CD4-positive, alpha-beta T cell (primary cell): ENCODE measurements at regions of chr17 and their contacts with region 1.

Region 1: GRCh38 chr17:40615295-40615988 is 32.2 kb downstream of the SMARCE1 start:
- DNase-seq: peak in 9 of 14 experiments; percentile 44 to 89 (median 55)
- ATAC-seq: peak; percentile 35
- H3K4me3 ChIP-seq: no peak overlapping the region
- H3K4me3 Mint-ChIP-seq: peak overlapping the region; percentile 75
- H3K27ac ChIP-seq: peak overlapping the region; percentile 96 to 99
- H3K27ac Mint-ChIP-seq: peak overlapping the region; percentile 98
- H3K4me1 ChIP-seq: peaks cover 83% of the 10 kb centered on the region
- H3K4me1 Mint-ChIP-seq: peaks cover 72% of the 10 kb centered on the region
- H3K27me3 ChIP-seq: no peaks in the 10 kb centered on the region
- H3K27me3 Mint-ChIP-seq: no peaks in the 10 kb centered on the region
- CTCF ChIP-seq: peak; percentile 67

Region 2: GRCh38 chr17:39443326-39443725 is 1172.1 kb before region 1 on chr17:
- CTCF ChIA-PET with region 1: no interaction called
- POLR2A ChIA-PET with region 1: no interaction called
- intact Hi-C with region 1: no loop called
- DNase-seq: no peak
- ATAC-seq: no peak
- H3K4me3 ChIP-seq: no peak overlapping the region
- H3K4me3 Mint-ChIP-seq: no peak overlapping the region
- H3K27ac ChIP-seq: no peak overlapping the region
- H3K27ac Mint-ChIP-seq: no peak overlapping the region
- H3K4me1 ChIP-seq: no peaks in the 10 kb centered on the region
- H3K4me1 Mint-ChIP-seq: peaks cover 14% of the 10 kb centered on the region
- H3K27me3 ChIP-seq: no peaks in the 10 kb centered on the region
- H3K27me3 Mint-ChIP-seq: no peaks in the 10 kb centered on the region
- CTCF ChIP-seq: no peak

Region 3: DNA sequence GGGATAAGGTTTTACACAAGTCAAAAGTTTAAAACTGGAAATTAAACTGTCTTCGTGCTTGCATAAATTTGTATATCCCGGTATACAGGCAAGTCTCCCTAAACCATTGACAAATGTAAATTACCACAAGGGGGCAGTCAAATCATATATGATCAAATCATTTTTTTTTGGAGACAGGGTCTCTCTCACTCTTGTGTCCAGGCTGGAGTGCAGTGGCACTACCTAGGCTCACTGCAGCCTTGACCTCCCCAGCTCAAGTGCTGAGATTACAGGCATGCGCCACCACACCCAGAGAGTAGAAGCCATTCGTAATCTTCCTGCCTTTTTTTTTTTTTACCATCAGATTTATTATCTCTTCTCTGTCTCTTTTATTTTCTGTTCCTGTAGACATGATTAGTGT is 216.3 kb before region 1 on chr17:
- CTCF ChIA-PET with region 1: no interaction called
- POLR2A ChIA-PET with region 1: no interaction called
- intact Hi-C with region 1: loop called in 1 of 2 experiments (anchors 5 kb)
- DNase-seq: peak in 5 of 14 experiments; percentile 7 to 80 (median 52)
- ATAC-seq: peak; percentile 71
- H3K4me3 ChIP-seq: no peak overlapping the region
- H3K4me3 Mint-ChIP-seq: no peak overlapping the region
- H3K27ac ChIP-seq: no peak overlapping the region
- H3K27ac Mint-ChIP-seq: no peak overlapping the region
- H3K4me1 ChIP-seq: peaks cover 3% of the 10 kb centered on the region
- H3K4me1 Mint-ChIP-seq: peaks cover 22% of the 10 kb centered on the region
- H3K27me3 ChIP-seq: no peaks in the 10 kb centered on the region
- H3K27me3 Mint-ChIP-seq: no peaks in the 10 kb centered on the region
- CTCF ChIP-seq: peak; percentile 91

Region 4: GRCh38 chr17:40480501-40481003 is 134.9 kb before region 1 on chr17:
- CTCF ChIA-PET with region 1: no interaction called
- POLR2A ChIA-PET with region 1: no interaction called
- intact Hi-C with region 1: loop called in 1 of 2 experiments (anchors 5 kb)
- DNase-seq: peak; percentile 71 to 96 (median 83)
- ATAC-seq: peak; percentile 87
- H3K4me3 ChIP-seq: no peak overlapping the region
- H3K4me3 Mint-ChIP-seq: peak overlapping the region; percentile 68
- H3K27ac ChIP-seq: peak overlapping the region; percentile 57 to 71
- H3K27ac Mint-ChIP-seq: peak overlapping the region; percentile 97
- H3K4me1 ChIP-seq: peaks cover 80% of the 10 kb centered on the region
- H3K4me1 Mint-ChIP-seq: peaks cover 67% of the 10 kb centered on the region
- H3K27me3 ChIP-seq: no peaks in the 10 kb centered on the region
- H3K27me3 Mint-ChIP-seq: no peaks in the 10 kb centered on the region
- CTCF ChIP-seq: no peak

Region 5: GRCh38 chr17:40551879-40552768 is 63.3 kb before region 1 on chr17:
- CTCF ChIA-PET with region 1: interaction called, 28 read pairs
- POLR2A ChIA-PET with region 1: interaction called, 1,290 read pairs
- intact Hi-C with region 1: no loop called
- DNase-seq: peak in 6 of 14 experiments; percentile 39 to 76 (median 44)
- ATAC-seq: no peak
- H3K4me3 ChIP-seq: no peak overlapping the region
- H3K4me3 Mint-ChIP-seq: peak overlapping the region; percentile 55
- H3K27ac ChIP-seq: peak overlapping the region in 1 of 2 donors; percentile 100
- H3K27ac Mint-ChIP-seq: peak overlapping the region; percentile 92
- H3K4me1 ChIP-seq: peaks cover 99% of the 10 kb centered on the region
- H3K4me1 Mint-ChIP-seq: peaks cover 99% of the 10 kb centered on the region
- H3K27me3 ChIP-seq: no peaks in the 10 kb centered on the region
- H3K27me3 Mint-ChIP-seq: no peaks in the 10 kb centered on the region
- CTCF ChIP-seq: no peak

Region 6: GRCh38 chr17:40582328-40582901 is 33.0 kb before region 1 on chr17:
- CTCF ChIA-PET with region 1: interaction called, 19 read pairs
- POLR2A ChIA-PET with region 1: interaction called, 1,290 read pairs
- intact Hi-C with region 1: no loop called
- DNase-seq: peak; percentile 61 to 90 (median 82)
- ATAC-seq: peak; percentile 92
- H3K4me3 ChIP-seq: peak overlapping the region; percentile 21
- H3K4me3 Mint-ChIP-seq: peak overlapping the region; percentile 59
- H3K27ac ChIP-seq: peak overlapping the region; percentile 70 to 82
- H3K27ac Mint-ChIP-seq: peak overlapping the region; percentile 97
- H3K4me1 ChIP-seq: peaks cover 50% of the 10 kb centered on the region
- H3K4me1 Mint-ChIP-seq: peaks cover 93% of the 10 kb centered on the region
- H3K27me3 ChIP-seq: no peaks in the 10 kb centered on the region
- H3K27me3 Mint-ChIP-seq: no peaks in the 10 kb centered on the region
- CTCF ChIP-seq: no peak

Region 7: DNA sequence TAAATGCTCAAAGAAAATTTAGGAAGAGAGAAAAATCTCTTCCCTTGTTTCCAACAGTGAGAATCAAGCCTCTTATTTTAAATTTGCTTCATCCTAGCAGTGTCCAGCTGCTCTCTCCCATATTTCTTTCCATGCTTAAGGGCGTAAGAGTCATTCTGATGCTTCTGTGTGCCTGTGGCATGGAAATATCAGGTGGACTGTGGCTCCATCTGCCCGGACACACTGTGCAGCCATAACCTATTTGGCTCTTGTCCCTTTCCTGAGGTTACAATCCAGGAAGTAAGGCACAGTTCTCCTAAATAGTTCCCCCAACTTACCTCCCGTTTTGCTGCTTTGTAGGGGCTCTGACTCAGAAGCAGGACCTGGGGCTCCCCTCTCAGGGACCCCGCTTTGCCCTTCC is 55.8 kb after region 1 on chr17:
- CTCF ChIA-PET with region 1: no interaction called
- POLR2A ChIA-PET with region 1: no interaction called
- intact Hi-C with region 1: no loop called
- DNase-seq: no peak
- ATAC-seq: no peak
- H3K4me3 ChIP-seq: no peak overlapping the region
- H3K4me3 Mint-ChIP-seq: no peak overlapping the region
- H3K27ac ChIP-seq: no peak overlapping the region
- H3K27ac Mint-ChIP-seq: no peak overlapping the region
- H3K4me1 ChIP-seq: no peaks in the 10 kb centered on the region
- H3K4me1 Mint-ChIP-seq: no peaks in the 10 kb centered on the region
- H3K27me3 ChIP-seq: peaks cover 0 to 4% of the 10 kb centered on the region in 2 experiments
- H3K27me3 Mint-ChIP-seq: peaks cover 21% of the 10 kb centered on the region
- CTCF ChIP-seq: no peak

Region 8: GRCh38 chr17:40726919-40727318 is 111.5 kb after region 1 on chr17:
- CTCF ChIA-PET with region 1: interaction called, 3 read pairs
- POLR2A ChIA-PET with region 1: no interaction called
- intact Hi-C with region 1: loop called (anchors 1 kb)
- DNase-seq: peak in 3 of 14 experiments; percentile 29 to 38 (median 33)
- ATAC-seq: no peak
- H3K4me3 ChIP-seq: no peak overlapping the region
- H3K4me3 Mint-ChIP-seq: no peak overlapping the region
- H3K27ac ChIP-seq: no peak overlapping the region
- H3K27ac Mint-ChIP-seq: no peak overlapping the region
- H3K4me1 ChIP-seq: no peaks in the 10 kb centered on the region
- H3K4me1 Mint-ChIP-seq: no peaks in the 10 kb centered on the region
- H3K27me3 ChIP-seq: peaks cover 0 to 24% of the 10 kb centered on the region in 2 experiments
- H3K27me3 Mint-ChIP-seq: peaks cover 41% of the 10 kb centered on the region
- CTCF ChIP-seq: peak; percentile 46